Adrenal gland (tissue), 19 donors: ENCODE measurements at regions of chr4 and their contacts with region 1.

Region 1: DNA sequence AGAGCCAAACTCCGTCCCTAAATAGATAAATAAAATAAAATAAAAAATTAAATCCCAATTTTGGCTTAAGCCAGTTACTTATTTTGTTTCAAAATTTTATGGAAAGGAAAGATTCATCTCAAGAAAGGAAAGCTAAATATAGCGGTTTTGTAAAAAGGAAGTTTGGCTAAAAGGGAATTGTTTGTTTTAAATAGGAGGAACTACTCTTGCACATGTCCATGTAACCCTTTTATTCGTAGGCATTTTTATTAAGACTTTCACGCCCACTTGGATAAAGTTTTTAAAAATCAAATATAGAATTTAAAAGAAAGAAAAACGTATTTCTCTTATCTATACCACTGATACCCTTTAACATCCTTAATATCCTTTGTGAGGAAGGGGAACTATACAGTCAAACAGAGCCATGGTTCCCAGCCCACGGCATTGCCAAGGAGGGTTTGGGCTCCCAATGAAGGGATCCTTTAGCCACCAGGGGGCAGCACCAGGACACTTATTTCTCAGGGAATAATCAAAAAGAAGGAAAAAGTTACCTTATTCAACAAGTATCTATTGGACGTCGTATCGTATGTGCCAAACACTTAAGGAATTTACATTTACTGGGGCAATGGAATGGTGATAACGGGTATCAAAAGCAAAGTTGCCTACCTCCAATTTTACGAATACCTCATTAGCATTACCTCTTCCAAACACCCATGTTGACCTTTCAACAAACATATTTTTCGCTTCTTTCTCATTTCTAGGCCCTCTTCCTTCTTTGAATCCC is 27.7 kb downstream of the CDKN2AIP start:
- DNase-seq: peak; percentile 84 to 97 (median 92)
- H3K4me3 ChIP-seq: peak overlapping the region in 1 of 4 donors; percentile 29
- H3K27ac ChIP-seq: no peak overlapping the region
- H3K4me1 ChIP-seq: peaks cover 0 to 5% of the 10 kb centered on the region in 2 donors
- H3K27me3 ChIP-seq: no peaks in the 10 kb centered on the region
- CTCF ChIP-seq: peak; percentile 79 to 96 (median 84)
- POLR2A ChIP-seq: no peak

Region 2: DNA sequence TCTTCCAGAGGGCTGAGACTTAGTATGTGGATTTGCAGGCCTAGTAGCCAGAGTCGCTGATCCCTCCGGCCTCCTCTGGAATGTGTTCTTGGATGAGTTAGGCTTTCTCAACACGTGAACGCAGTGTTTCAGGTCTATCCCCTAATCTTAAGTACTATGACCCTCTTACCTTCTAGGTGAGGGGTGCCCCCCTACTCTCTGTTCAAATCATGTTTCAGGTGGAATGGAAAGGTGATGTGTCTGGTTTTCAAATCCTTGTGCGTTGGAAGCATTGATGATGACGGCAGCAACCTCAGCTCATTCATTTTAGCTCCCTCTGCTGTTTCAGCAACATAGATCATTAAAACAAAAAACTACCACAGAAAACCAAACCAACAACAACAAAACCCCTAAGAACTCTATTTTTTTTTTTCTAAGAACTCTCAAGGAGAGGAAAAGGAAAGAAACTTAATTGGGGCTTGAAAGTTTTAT is 130.5 kb after region 1 on chr4:
- intact Hi-C with region 1: loop called in 1 of 2 experiments (anchors 10 kb)
- DNase-seq: peak in 1 of 7 donors; percentile 26
- H3K4me3 ChIP-seq: no peak overlapping the region
- H3K27ac ChIP-seq: peak overlapping the region in 1 of 5 donors; percentile 25
- H3K4me1 ChIP-seq: peaks cover 0 to 9% of the 10 kb centered on the region in 2 donors
- H3K27me3 ChIP-seq: no peaks in the 10 kb centered on the region
- CTCF ChIP-seq: peak; percentile 8 to 69 (median 47)
- POLR2A ChIP-seq: no peak

Region 3: GRCh38 chr4:183659029-183659871 is 187.1 kb after region 1 on chr4 and contains the starts of genes RWDD4 and TRAPPC11:
- intact Hi-C with region 1: loop called in 1 of 2 experiments (anchors 10 kb)
- DNase-seq: peak; percentile 98 to 99 (median 99)
- H3K4me3 ChIP-seq: peak within 1 kb of the TSS; percentile 31 to 93 (median 86)
- H3K27ac ChIP-seq: peak within 1 kb of the TSS; percentile 66 to 99 (median 92)
- H3K4me1 ChIP-seq: peaks cover 22 to 32% of the 10 kb centered on the region in 2 donors
- H3K27me3 ChIP-seq: no peaks in the 10 kb centered on the region
- CTCF ChIP-seq: peak in 5 of 6 experiments; percentile 22 to 69 (median 50)
- POLR2A ChIP-seq: peak; percentile 90 to 99
- total RNA-seq, gene RWDD4: 39.4 to 157 (median 59.9) TPM
- total RNA-seq, gene TRAPPC11: 34.9 to 116 (median 55.7) TPM